ENCODE measurements at regions of chr2 and their contacts with region 1.

Region 1: DNA sequence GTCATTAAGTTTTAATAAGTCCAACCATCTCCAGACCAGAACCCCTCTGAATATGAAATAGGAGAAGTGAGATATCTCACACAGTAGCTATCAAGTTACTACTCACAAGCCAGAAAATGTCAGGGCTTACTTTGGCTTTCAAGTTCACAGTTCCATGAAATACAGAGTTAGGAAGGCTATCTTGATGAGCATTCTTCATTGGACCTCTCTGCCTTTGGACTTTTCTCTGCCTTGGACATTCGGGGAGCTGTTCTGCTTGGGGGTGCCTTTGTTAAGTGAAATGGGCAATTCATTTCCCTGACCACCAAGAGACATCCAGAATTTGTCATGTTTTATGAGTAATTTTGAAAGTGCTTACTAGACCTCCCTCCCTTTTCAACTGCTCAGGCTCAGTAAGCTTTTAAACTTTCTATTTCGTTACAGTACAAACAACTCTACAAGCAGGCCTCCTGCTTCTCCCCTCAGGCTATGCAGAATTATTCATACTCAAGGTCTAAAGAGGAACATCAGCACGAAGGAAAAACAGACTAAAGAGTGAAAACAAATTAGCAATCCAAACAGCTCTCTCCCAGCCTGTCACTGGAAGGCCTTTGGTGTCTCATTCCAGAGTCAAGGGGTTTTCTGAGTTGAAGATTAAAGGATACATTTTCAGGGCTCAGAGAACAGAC is 95.3 kb downstream of the MREG start:
- DNase-seq: no peak
- H3K4me3 ChIP-seq: no peak overlapping the region
- H3K27ac ChIP-seq: peak overlapping the region; percentile 31 to 56
- H3K4me1 ChIP-seq: peaks cover 0 to 27% (median 17%) of the 10 kb centered on the region in 4 donors
- H3K27me3 ChIP-seq: no peaks in the 10 kb centered on the region
- CTCF ChIP-seq: no peak

Region 2: DNA sequence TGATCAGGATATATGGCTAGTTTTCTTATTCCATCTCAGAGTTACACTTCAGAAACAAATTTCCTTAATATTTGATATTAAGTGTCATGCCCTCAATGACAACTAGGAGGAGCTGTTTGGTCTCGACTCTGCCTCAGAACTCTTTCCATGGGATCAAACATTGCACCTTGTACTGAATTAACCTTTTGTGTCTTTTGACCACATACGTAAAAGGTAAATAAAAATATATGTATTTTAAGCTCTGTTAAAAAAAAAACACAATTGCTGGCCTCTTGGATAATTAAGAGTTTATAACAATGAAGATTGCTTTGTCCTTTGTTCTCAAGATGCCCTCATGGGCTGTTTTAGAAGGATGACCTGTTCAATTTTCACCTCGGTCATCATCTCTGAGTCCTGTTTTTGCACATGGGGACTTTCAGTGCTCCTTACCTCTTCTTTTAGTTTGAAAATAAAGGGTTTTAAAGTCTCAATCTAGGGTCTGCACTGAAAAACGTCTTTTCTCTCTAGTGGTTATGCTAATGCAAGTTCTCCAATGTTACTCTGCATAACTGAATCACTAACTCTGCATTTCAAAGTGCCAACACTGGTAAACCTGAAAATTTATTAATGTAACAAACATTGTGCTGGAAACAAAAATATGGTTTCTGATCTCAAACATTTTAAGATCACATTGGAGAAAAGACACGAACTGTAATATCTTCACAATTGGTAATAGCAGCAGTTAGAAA is 463.4 kb before region 1 on chr2:
- intact Hi-C with region 1: loop called (anchors 2 kb)
- DNase-seq: no peak
- H3K4me3 ChIP-seq: no peak overlapping the region
- H3K27ac ChIP-seq: no peak overlapping the region
- H3K4me1 ChIP-seq: peaks cover 0 to 12% (median 2%) of the 10 kb centered on the region in 4 donors
- H3K27me3 ChIP-seq: no peaks in the 10 kb centered on the region
- CTCF ChIP-seq: peak; percentile 80 to 86

Region 3: GRCh38 chr2:216001216-216002100 is 83.4 kb after region 1 on chr2:
- intact Hi-C with region 1: no loop called
- DNase-seq: no peak
- H3K4me3 ChIP-seq: no peak overlapping the region
- H3K27ac ChIP-seq: no peak overlapping the region
- H3K4me1 ChIP-seq: peaks cover 0 to 4% (median 0%) of the 10 kb centered on the region in 4 donors
- H3K27me3 ChIP-seq: no peaks in the 10 kb centered on the region
- CTCF ChIP-seq: no peak

Measured in tibial artery (tissue), 4 donors.